IMR-90 (cell line): ENCODE measurements at regions of chr18 and their contacts with region 1.

Region 1: DNA sequence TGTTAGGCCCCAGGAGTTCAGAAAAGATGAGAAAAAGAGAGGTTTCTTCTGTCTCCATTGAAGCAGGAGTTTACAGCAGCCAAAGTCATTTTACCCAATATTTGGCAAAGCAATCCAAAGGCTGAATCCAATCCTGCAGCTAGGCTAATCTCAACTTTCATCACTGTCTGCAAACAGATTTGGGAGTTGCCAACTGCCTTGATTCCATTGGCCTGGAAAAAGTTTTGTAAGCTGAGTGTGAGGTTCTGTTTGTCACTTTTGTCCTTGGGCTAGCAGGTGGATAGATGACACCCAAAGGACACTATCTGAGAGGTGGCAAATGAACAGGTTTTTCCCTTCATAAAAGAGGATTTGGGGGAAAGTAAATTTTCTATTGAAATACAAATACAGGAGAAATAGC is 56.6 kb upstream of the SETBP1 start:
- DNase-seq: no peak
- ATAC-seq: no peak
- H3K4me3 ChIP-seq: no peak overlapping the region
- H3K27ac ChIP-seq: no peak overlapping the region
- H3K4me1 ChIP-seq: no peaks in the 10 kb centered on the region
- H3K27me3 ChIP-seq: no peaks in the 10 kb centered on the region; the same call in 1 of the 2 replicates
- CTCF ChIP-seq: no peak
- POLR2A ChIP-seq: no peak
- RAD21 ChIP-seq: no peak

Region 2: GRCh38 chr18:44437603-44438002 is 186.4 kb before region 1 on chr18:
- CTCF ChIA-PET with region 1: no interaction called
- POLR2A ChIA-PET with region 1: no interaction called
- dilution Hi-C with region 1: no loop called
- in situ Hi-C with region 1: no loop called
- intact Hi-C with region 1: loop called (anchors 5 kb)
- DNase-seq: no peak
- ATAC-seq: no peak
- H3K4me3 ChIP-seq: no peak overlapping the region
- H3K27ac ChIP-seq: no peak overlapping the region
- H3K4me1 ChIP-seq: no peaks in the 10 kb centered on the region
- H3K27me3 ChIP-seq: no peaks in the 10 kb centered on the region
- CTCF ChIP-seq: no peak
- POLR2A ChIP-seq: no peak
- RAD21 ChIP-seq: no peak